Dorsolateral prefrontal cortex (tissue), 120 donors: ENCODE measurements at regions of chr7 and their contacts with region 1.

Region 1: GRCh38 chr7:51141451-51142003 is 175.1 kb downstream of the COBL start:
- DNase-seq: no peak
- H3K4me3 ChIP-seq: no peak overlapping the region
- H3K27ac ChIP-seq: peak overlapping the region in 55 of 59 donors; percentile 0 to 85 (median 63)
- H3K27me3 ChIP-seq: no peaks in the 10 kb centered on the region
- CTCF ChIP-seq: peak; percentile 21 to 82 (median 66)

Region 2: DNA sequence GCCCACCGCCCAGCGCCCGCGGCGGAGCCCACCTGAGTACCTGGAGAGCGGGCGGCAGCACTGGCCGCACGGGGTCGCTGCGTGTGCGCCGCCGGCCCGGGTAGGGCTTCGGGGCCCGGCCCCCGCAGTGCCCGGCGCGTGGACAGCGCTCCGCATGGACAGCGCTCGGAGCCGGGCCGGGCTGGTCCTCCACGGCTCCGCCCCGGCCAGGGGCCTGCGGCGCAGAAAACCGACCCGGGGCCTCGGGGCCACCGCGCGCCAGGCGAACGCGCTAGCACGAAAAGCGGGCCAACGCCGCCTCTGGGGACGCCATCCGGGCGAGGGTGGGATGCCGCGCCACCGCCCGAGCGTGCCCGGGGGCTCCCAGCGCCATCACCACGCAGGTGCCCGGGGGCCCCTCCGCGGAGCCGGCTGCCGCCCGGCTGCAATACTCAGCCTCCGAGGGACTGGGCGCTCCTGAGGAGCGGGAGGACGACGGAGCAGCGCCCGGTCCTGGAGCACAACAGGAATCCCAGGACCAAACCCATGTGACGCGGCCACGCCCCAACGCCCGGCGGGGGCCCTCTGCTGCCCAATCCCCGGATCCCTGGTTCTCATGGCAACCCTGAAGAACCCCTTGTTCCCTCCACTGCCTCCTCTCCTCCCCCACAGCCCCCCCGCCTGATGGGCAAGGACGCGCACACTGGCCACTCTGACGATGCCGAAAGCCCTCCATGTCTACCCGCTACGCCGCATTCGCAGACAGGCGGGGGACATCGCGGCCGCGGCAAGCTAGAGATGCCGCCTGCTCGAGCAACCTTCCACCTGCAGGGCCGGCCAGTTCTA is 358.9 kb before region 1 on chr7 and contains the start of gene GRB10:
- intact Hi-C with region 1: loop called in 1 of 2 experiments (anchors 5 kb)
- DNase-seq: peak; percentile 77 to 91 (median 87)
- H3K4me3 ChIP-seq: peak within 1 kb of the TSS; percentile 34 to 78 (median 64)
- H3K27ac ChIP-seq: peak within 1 kb of the TSS in 57 of 59 donors; percentile 54 to 92 (median 84)
- H3K27me3 ChIP-seq: peaks cover 0 to 8% (median 0%) of the 10 kb centered on the region in 45 donors
- CTCF ChIP-seq: peak in 32 of 56 donors; percentile 2 to 67 (median 28)
- total RNA-seq, gene GRB10: 74.7 to 208 (median 113) TPM

Region 3: DNA sequence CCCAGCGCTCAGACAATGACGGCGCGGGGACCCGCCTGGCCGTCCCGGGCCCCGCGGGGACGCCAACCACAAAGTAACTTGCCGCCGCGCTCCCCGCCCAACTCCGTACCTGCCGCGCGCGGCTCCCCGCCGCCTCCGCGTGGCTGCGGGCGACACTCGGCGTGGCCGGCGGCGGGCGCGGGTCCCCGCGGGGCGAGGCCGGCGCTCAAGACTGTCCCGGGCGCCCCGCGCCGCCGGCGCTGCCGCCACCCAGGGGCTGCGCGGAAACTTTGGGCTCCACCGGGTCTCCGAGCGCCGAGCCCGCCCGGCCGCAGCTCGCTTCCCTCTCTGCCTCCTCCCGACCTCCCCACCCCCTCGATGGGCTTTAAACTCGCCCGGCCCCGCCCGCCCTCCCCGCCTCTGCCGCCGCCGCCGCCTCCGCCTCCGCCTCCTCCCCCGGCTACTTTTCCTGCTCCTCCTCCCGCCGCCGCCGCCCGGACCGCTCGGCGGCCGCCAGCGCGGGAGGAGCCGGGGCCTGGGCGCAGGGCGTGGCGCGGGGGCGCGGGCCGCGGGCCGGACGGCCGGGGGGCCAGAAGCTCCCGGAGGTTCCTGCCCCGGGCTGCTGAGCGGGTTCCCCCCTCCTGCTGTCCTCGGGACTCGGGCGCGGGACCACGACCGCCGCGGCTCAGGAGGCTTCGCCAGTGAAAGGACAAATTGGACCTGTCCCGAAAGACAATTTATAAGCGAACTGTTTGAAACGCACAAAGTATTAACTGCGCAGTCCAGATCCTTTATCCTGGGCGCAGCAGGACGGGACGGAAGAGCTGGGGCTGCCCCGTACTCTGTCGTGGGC is 348.2 kb before region 1 on chr7:
- intact Hi-C with region 1: loop called in 1 of 2 experiments (anchors 5 kb)
- DNase-seq: peak in 2 of 10 donors; percentile 28 to 46
- H3K4me3 ChIP-seq: peak overlapping the region in 58 of 59 donors; percentile 7 to 73 (median 52)
- H3K27ac ChIP-seq: peak overlapping the region in 21 of 59 donors; percentile 13 to 72 (median 42)
- H3K27me3 ChIP-seq: peaks cover 0 to 48% (median 20%) of the 10 kb centered on the region in 45 donors
- CTCF ChIP-seq: no peak

Region 4: DNA sequence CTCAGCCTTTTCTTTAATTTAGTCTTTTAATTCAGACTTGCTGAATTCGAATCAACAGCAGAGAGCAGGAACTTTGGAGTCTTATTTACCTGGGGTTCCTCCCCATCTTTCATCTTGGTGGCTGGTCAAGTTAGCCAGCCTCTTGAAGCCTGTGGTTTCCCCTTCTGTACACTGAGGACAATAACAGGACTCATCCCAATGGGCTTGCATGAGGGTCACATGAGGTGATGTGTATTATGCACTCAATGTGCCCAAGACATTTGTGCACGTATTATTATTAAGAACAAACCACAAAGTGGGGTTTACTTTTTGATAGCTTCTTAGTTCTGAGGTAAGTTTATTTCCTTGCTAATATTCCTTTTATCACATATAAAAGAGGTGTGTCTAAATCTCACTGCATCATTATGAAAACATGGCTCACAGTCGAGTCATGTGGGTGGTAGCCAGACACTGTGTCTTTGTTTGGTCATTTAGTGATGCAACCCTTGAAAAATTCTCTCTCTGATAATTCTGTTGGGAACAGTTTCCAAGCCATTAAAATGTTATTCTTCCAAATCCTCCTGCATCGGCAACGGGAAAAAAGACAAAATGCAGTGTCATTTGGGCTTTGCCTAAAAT is 272.3 kb before region 1 on chr7:
- intact Hi-C with region 1: loop called in 1 of 2 experiments (anchors 10 kb)
- DNase-seq: peak in 1 of 10 donors; percentile 57
- H3K4me3 ChIP-seq: peak overlapping the region in 9 of 59 donors; percentile 1 to 36 (median 28)
- H3K27ac ChIP-seq: peak overlapping the region in 54 of 59 donors; percentile 4 to 85 (median 65)
- H3K27me3 ChIP-seq: peaks cover 0 to 5% (median 0%) of the 10 kb centered on the region in 45 donors
- CTCF ChIP-seq: no peak

Region 5: DNA sequence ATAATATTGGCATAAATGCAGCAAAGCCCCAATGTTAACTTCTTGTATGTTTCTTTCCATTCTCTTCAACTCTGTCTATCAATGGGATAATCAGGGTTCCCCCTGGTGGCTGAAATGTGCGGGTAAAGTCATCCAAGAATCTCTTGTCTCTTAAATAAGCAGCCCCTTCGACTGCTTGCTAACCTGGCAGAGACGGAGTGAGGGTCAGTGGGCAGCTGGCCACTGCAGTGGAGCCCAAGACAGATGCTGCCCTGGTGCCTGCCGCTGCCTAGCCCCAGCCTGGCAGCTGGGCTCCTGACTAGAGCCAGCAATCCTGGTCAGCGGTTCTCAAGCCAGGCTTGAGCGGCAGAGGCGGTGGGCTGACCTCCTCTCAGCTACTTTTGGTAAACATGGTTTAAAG is 73.8 kb before region 1 on chr7:
- intact Hi-C with region 1: loop called (anchors 5 kb)
- DNase-seq: peak in 6 of 10 donors; percentile 33 to 86 (median 61)
- H3K4me3 ChIP-seq: peak overlapping the region in 25 of 59 donors; percentile 2 to 51 (median 12)
- H3K27ac ChIP-seq: peak overlapping the region in 58 of 59 donors; percentile 5 to 94 (median 78)
- H3K27me3 ChIP-seq: no peaks in the 10 kb centered on the region
- CTCF ChIP-seq: peak; percentile 51 to 83 (median 74)

Region 6: DNA sequence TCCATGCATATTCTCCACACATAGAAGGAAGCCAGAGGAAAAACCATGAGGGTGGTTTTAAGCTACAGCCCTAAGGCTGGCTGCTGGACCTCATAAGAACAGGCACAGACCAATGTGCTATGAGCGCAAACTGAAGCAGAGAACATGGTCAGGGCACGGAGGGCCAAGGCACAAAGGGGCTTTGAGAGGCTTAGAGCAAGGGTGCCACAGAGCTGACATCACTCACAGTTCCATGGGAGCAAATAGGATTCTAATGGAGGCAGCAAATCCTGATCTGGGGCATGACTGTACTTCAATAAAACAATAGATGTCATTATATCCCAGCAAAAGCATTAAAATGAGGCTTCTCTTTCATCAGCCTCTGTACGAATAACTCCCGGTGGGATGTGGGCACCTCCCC is 12.7 kb after region 1 on chr7:
- intact Hi-C with region 1: no loop called
- DNase-seq: peak in 8 of 10 donors; percentile 56 to 87 (median 81)
- H3K4me3 ChIP-seq: peak overlapping the region in 8 of 59 donors; percentile 0 to 21 (median 10)
- H3K27ac ChIP-seq: peak overlapping the region; percentile 0 to 97 (median 90)
- H3K27me3 ChIP-seq: no peaks in the 10 kb centered on the region
- CTCF ChIP-seq: peak in 9 of 56 donors; percentile 7 to 31 (median 16)